A673 (cell line): ENCODE measurements at regions of chr14 and their contacts with region 1.

Region 1: GRCh38 chr14:47539031-47539461 is 136.4 kb downstream of the MDGA2 start:
- DNase-seq: peak; percentile 57
- H3K4me3 ChIP-seq: no peak overlapping the region
- H3K27ac ChIP-seq: no peak overlapping the region
- H3K4me1 ChIP-seq: no peaks in the 10 kb centered on the region
- H3K27me3 ChIP-seq: peaks cover 4% of the 10 kb centered on the region
- CTCF ChIP-seq: peak; percentile 61

Region 2: GRCh38 chr14:46488374-46488773 is 1050.7 kb before region 1 on chr14:
- CTCF ChIA-PET with region 1: no interaction called
- POLR2A ChIA-PET with region 1: no interaction called
- intact Hi-C with region 1: loop called (anchors 5 kb)
- DNase-seq: no peak
- H3K4me3 ChIP-seq: no peak overlapping the region
- H3K27ac ChIP-seq: no peak overlapping the region
- H3K4me1 ChIP-seq: no peaks in the 10 kb centered on the region
- H3K27me3 ChIP-seq: peaks cover 16% of the 10 kb centered on the region
- CTCF ChIP-seq: no peak

Region 3: DNA sequence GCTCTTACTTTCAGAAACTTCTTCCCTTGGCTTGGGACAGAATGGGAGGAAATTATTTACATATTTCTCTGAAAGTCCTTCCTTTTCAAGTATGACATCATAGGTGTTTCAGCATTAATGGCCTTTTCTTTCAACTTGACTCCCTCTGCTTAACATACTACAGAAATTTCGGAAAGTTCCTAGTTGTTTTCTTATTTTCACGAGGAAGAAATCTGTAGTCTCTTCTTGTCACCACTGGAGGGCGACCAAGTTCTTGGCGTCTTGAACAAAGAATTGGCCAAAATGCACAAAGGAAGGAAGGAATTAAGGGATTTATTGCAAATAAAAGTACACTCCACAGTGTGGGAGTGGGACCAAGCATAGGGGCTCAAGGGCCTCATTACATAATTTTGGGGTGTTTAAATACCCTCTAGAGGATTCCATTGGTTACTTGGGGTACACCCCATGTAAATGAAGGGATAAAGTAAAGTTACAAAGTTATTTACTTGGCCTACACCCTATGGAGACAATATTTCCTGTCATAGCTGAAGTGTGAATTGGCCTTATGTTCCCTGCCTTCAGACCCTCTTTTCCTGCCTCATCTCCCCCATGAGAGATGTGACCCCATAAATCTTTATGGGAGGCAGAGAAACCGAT is 957.9 kb before region 1 on chr14:
- CTCF ChIA-PET with region 1: no interaction called
- POLR2A ChIA-PET with region 1: no interaction called
- intact Hi-C with region 1: loop called (anchors 5 kb)
- DNase-seq: peak; percentile 80
- H3K4me3 ChIP-seq: no peak overlapping the region
- H3K27ac ChIP-seq: no peak overlapping the region
- H3K4me1 ChIP-seq: peaks cover 7% of the 10 kb centered on the region
- H3K27me3 ChIP-seq: no peaks in the 10 kb centered on the region
- CTCF ChIP-seq: peak; percentile 83

Region 4: GRCh38 chr14:47057364-47057763 is 481.7 kb before region 1 on chr14:
- CTCF ChIA-PET with region 1: no interaction called
- POLR2A ChIA-PET with region 1: no interaction called
- intact Hi-C with region 1: loop called (anchors 10 kb)
- DNase-seq: no peak
- H3K4me3 ChIP-seq: no peak overlapping the region
- H3K27ac ChIP-seq: no peak overlapping the region
- H3K4me1 ChIP-seq: no peaks in the 10 kb centered on the region
- H3K27me3 ChIP-seq: peaks cover 5% of the 10 kb centered on the region
- CTCF ChIP-seq: no peak

Region 5: GRCh38 chr14:47332939-47333338 is 206.1 kb before region 1 on chr14:
- CTCF ChIA-PET with region 1: no interaction called
- POLR2A ChIA-PET with region 1: no interaction called
- intact Hi-C with region 1: loop called (anchors 10 kb)
- DNase-seq: peak; percentile 2
- H3K4me3 ChIP-seq: no peak overlapping the region
- H3K27ac ChIP-seq: no peak overlapping the region
- H3K4me1 ChIP-seq: no peaks in the 10 kb centered on the region
- H3K27me3 ChIP-seq: peaks cover 14% of the 10 kb centered on the region
- CTCF ChIP-seq: peak; percentile 42; the same call in 1 of the 2 replicates